ENCODE measurements at regions of chr6 and their contacts with region 1.

Region 1: GRCh38 chr6:32894080-32895005 is 40.4 kb downstream of the PSMB9 start:
- DNase-seq: peak; percentile 95
- ATAC-seq: peak; percentile 100

Region 2: DNA sequence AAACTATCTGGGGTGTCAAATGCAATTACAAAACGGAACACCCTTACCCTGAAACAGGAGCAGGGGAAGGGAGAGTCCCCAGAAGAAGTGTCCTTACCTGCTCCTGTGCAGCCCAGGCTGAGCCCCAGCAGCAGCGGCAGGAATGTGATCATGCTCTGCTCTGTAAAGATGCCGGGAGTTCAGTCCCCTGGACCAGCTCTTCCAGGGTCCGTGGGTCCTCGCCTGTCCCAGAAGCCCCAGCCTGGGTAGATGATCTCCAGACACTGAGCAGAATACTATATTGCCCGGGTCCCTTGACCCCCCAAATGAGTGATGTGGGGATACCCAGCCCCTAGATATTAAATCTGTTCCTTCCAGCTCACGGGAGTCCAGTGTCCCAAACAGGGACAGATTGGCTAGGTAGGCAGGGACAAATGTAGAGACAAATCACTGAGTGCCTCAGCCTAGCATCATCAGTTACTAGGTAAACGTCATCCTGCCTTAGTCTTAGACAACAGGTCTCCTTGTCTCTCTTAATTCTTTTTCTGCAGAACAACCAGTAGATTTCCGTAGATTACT is 46.4 kb after region 1 on chr6 and contains the start of gene HLA-DMB:
- intact Hi-C with region 1: loop called (anchors 1 kb)
- DNase-seq: no peak
- ATAC-seq: peak; percentile 92
- total RNA-seq, gene HLA-DMB: 8.8 TPM

Region 3: DNA sequence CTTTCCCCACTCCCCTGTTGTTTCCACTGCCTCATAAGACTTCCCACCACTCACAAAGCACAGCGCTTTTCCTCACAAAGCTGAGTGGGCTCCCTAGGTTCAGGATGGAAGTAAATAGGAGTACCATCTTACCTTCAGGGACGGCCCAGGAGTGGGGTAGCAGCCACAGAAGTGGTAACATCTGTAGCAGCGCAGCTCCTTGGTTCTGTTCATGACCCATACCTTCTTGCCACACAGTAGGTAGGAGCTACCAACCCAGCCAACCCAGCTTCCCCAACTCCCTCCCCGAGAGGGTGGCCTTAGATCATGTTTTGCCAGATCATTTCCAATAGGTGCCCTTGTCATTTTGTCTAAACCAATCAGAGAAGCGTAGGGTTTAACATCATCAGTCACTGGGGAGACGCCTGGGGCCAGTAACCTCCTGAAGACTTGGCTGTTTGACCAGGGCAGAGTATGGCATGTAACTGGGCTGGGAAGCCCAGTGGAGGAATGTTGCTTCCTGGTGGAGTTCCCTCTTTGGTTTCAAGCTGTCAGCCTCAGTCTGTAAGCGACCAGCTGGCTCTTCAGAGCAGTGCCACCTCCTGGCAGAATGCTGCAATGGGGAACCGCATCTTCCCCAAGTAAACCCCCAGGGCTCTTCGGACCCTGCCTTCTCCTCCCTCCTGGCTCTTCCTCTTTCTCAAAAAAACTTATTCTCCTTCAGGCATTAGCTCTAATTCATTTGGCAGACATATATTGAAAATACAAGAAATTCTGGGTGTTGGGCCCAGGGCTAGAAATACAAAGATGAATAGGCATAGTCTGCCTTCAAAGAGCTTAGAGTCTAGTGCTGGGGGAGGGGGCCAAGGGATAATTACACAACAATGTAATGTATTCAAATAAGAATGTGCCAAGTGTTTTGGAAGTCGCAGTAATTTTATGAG is 58.7 kb after region 1 on chr6 and contains the start of gene HLA-DMA:
- intact Hi-C with region 1: loop called (anchors 2 kb)
- DNase-seq: peak; percentile 87
- ATAC-seq: peak; percentile 99
- total RNA-seq, gene HLA-DMA: 19.7 TPM

Measured in Right ventricle myocardium inferior (tissue), 1 donor.